Breast epithelium (tissue), 4 donors: ENCODE measurements at regions of chr9 and their contacts with region 1.

Region 1: GRCh38 chr9:123299558-123300126 is 31.3 kb upstream of the STRBP start:
- DNase-seq: no peak
- H3K4me3 ChIP-seq: no peak overlapping the region
- H3K27ac ChIP-seq: no peak overlapping the region
- H3K4me1 ChIP-seq: no peaks in the 10 kb centered on the region
- H3K27me3 ChIP-seq: no peaks in the 10 kb centered on the region
- CTCF ChIP-seq: no peak
- POLR2A ChIP-seq: no peak

Region 2: DNA sequence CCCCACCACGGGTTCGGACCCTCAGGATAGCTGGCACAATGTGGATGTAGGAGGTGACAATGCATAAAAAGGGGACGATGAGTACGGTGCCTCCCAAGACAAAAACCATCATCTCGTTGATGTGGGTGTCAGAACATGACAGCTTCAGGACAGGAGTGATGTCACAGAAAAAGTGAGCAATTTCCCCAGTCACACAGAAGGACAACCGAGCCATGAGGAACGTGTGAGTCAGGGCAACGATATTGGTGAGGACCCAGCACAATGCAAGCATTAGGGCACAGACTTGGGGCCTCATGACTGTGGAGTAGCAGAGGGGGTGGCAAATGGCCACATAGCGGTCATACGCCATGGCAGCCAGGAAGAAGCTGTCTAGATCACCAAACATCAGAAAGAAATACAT is 773.0 kb before region 1 on chr9:
- intact Hi-C with region 1: no loop called
- DNase-seq: no peak
- H3K4me3 ChIP-seq: no peak overlapping the region
- H3K27ac ChIP-seq: no peak overlapping the region
- H3K4me1 ChIP-seq: no peaks in the 10 kb centered on the region
- H3K27me3 ChIP-seq: no peaks in the 10 kb centered on the region
- CTCF ChIP-seq: no peak
- POLR2A ChIP-seq: no peak

Region 3: DNA sequence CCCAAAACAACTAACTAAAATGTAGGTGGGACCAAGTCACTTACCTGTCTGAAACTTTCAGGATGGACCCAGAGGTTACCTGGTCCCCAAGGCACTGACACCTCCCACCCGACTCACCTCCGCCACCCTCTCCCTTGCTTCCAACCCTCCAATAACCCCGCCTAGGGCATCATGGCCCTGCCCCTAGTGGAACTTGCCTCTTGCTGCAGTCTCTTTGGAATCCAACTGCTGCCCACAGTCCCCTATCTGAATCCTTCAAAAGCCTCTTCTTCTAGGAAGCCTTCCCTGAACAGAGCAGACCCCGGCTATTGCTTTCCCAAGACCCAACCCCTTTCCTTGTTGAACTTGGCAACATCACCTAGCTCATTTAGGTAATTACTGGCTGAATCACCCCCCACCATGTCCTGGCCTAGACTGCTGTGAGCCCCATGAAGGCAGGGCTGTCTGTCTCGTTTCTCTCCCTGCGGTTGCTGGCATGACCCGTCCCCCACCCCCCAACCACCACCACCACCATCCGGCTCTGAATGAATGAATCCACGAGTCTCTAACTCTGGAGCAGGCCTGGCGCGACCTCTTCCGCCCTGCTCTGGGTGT is 65.7 kb after region 1 on chr9:
- intact Hi-C with region 1: no loop called
- DNase-seq: no peak
- H3K4me3 ChIP-seq: no peak overlapping the region
- H3K27ac ChIP-seq: no peak overlapping the region
- H3K4me1 ChIP-seq: no peaks in the 10 kb centered on the region
- H3K27me3 ChIP-seq: peaks cover 0 to 10% of the 10 kb centered on the region in 2 donors
- CTCF ChIP-seq: no peak
- POLR2A ChIP-seq: no peak

Region 4: GRCh38 chr9:123472862-123473614 is 173.4 kb after region 1 on chr9:
- intact Hi-C with region 1: loop called (anchors 5 kb)
- DNase-seq: no peak
- H3K4me3 ChIP-seq: no peak overlapping the region
- H3K27ac ChIP-seq: no peak overlapping the region
- H3K4me1 ChIP-seq: no peaks in the 10 kb centered on the region
- H3K27me3 ChIP-seq: no peaks in the 10 kb centered on the region
- CTCF ChIP-seq: no peak
- POLR2A ChIP-seq: no peak